B cell (primary cell): ENCODE measurements at regions of chr19 and their contacts with region 1.

Region 1: GRCh38 chr19:35044317-35045117 is 3.0 kb downstream of the HPN start:
- DNase-seq: peak; percentile 63
- ATAC-seq: no peak
- H3K4me3 ChIP-seq: no peak overlapping the region
- H3K4me3 Mint-ChIP-seq: no peak overlapping the region
- H3K27ac ChIP-seq: no peak overlapping the region
- H3K27ac Mint-ChIP-seq: peak overlapping the region; percentile 32
- H3K4me1 ChIP-seq: peaks cover 27 to 35% of the 10 kb centered on the region in 2 donors
- H3K4me1 Mint-ChIP-seq: peaks cover 35% of the 10 kb centered on the region
- H3K27me3 ChIP-seq: peaks cover 0 to 22% (median 7%) of the 10 kb centered on the region in 4 experiments
- H3K27me3 Mint-ChIP-seq: peaks cover 14% of the 10 kb centered on the region
- CTCF ChIP-seq: peak; percentile 94

Region 2: GRCh38 chr19:35055715-35056179 is 11.2 kb after region 1 on chr19:
- CTCF ChIA-PET with region 1: interaction called, 16 read pairs
- POLR2A ChIA-PET with region 1: no interaction called
- intact Hi-C with region 1: no loop called
- DNase-seq: peak; percentile 43
- ATAC-seq: peak; percentile 51
- H3K4me3 ChIP-seq: no peak overlapping the region
- H3K4me3 Mint-ChIP-seq: no peak overlapping the region
- H3K27ac ChIP-seq: no peak overlapping the region
- H3K27ac Mint-ChIP-seq: no peak overlapping the region
- H3K4me1 ChIP-seq: no peaks in the 10 kb centered on the region
- H3K4me1 Mint-ChIP-seq: no peaks in the 10 kb centered on the region
- H3K27me3 ChIP-seq: no peaks in the 10 kb centered on the region
- H3K27me3 Mint-ChIP-seq: peaks cover 9% of the 10 kb centered on the region
- CTCF ChIP-seq: peak; percentile 24

Region 3: DNA sequence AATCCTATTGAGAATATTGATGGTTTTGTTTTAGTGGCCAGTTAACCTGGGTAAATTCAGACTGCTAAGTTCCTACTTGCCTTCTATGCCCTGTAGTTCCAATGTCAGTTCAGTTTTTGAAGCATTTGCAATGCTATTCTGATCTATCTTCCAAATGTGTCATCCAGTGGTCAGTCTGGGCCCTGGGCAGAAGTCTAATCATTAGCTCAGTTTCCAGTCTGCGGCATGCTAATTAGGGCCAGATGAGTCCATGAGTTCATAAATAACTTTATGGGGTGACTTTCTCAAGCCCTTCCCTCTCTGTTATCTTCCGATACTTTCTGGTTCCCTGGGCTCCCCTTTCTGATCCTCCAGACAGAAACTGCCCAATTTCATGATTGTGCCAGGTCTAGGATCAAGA is 151.3 kb after region 1 on chr19:
- CTCF ChIA-PET with region 1: no interaction called
- POLR2A ChIA-PET with region 1: no interaction called
- intact Hi-C with region 1: no loop called
- DNase-seq: no peak
- ATAC-seq: no peak
- H3K4me3 ChIP-seq: no peak overlapping the region
- H3K4me3 Mint-ChIP-seq: no peak overlapping the region
- H3K27ac ChIP-seq: no peak overlapping the region
- H3K27ac Mint-ChIP-seq: no peak overlapping the region
- H3K4me1 ChIP-seq: no peaks in the 10 kb centered on the region
- H3K4me1 Mint-ChIP-seq: peaks cover 5% of the 10 kb centered on the region
- H3K27me3 ChIP-seq: no peaks in the 10 kb centered on the region
- H3K27me3 Mint-ChIP-seq: no peaks in the 10 kb centered on the region
- CTCF ChIP-seq: no peak